HCT116 (cell line): ENCODE measurements at regions of chr16 and their contacts with region 1.

Region 1: GRCh38 chr16:88287219-88287618 is 95.5 kb upstream of the ZNF469 start:
- DNase-seq: peak; percentile 63
- ATAC-seq: peak; percentile 98
- H3K4me3 ChIP-seq: no peak overlapping the region
- H3K27ac ChIP-seq: no peak overlapping the region
- H3K4me1 ChIP-seq: peaks cover 4 to 14% of the 10 kb centered on the region in 2 experiments; a peak in 3 of 4 replicates
- H3K27me3 ChIP-seq: peaks cover 20% of the 10 kb centered on the region; the same call in 1 of the 2 replicates
- CTCF ChIP-seq: peak; percentile 93 to 100 (median 100)
- POLR2A ChIP-seq: no peak
- RAD21 ChIP-seq: peak; percentile 96

Region 2: GRCh38 chr16:88194397-88195268 is 92.6 kb before region 1 on chr16:
- CTCF ChIA-PET with region 1: interaction called, 4 read pairs
- POLR2A ChIA-PET with region 1: no interaction called
- RAD21 ChIA-PET with region 1: no interaction called
- intact Hi-C with region 1: loop called (anchors 1 kb)
- DNase-seq: no peak
- ATAC-seq: peak; percentile 49
- H3K4me3 ChIP-seq: no peak overlapping the region
- H3K27ac ChIP-seq: no peak overlapping the region
- H3K4me1 ChIP-seq: peaks cover 0 to 5% of the 10 kb centered on the region in 2 experiments; a peak in 1 of 4 replicates
- H3K27me3 ChIP-seq: no peaks in the 10 kb centered on the region
- CTCF ChIP-seq: peak in 1 of 3 experiments; percentile 19; a peak in 1 of 6 replicates
- POLR2A ChIP-seq: no peak
- RAD21 ChIP-seq: no peak; the same call in 1 of the 2 replicates

Region 3: DNA sequence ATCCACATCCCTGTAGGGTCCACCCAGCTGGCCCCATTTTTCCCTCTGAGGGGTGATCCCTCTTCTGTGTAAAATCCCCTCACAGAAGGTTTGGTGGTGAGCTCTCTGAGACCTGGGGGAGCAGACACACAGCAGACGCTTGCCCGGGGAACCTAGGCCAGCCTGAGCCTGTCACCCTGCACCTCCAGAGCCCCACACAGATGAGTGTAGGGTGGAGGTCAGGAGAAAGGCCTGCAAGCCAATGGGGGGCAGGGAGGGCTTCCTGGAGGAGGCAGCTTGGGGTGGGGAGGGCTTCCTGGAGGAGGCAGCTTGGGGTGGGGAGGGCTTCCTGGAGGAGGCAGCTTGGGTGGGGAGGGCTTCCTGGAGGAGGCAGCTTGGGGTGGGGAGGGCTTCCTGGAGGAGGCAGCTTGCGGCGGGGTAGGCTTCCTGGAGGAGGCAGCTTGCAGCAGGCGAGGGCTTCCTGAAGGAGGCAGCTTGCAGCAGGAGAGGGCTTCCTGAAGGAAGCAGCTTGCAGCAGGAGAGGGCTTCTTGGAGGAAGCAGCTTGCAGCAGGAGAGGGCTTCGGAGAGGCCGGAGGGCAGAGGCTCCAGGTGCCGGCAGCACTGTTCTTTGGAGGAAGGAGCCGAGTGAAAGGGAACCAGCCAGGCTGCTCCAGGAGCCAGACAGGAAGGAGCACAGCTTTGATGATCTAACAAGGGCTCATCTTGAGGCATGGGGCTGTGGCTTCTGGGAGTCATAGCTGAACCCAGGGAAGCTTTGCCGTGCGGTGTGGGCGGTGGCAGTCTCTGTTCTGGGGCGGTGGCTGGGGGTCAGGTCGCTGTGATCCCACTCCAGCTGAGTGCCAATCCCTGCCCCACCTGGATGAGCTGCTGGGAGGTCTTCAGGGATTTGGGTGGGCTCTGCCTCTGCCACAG is 11.9 kb after region 1 on chr16:
- CTCF ChIA-PET with region 1: interaction called, 16 read pairs
- POLR2A ChIA-PET with region 1: no interaction called
- RAD21 ChIA-PET with region 1: no interaction called
- intact Hi-C with region 1: no loop called
- DNase-seq: no peak
- ATAC-seq: no peak
- H3K4me3 ChIP-seq: no peak overlapping the region
- H3K27ac ChIP-seq: no peak overlapping the region
- H3K4me1 ChIP-seq: peaks cover 4 to 22% of the 10 kb centered on the region in 2 experiments; a peak in 3 of 4 replicates
- H3K27me3 ChIP-seq: peaks cover 18% of the 10 kb centered on the region; the same call in 1 of the 2 replicates
- CTCF ChIP-seq: no peak
- POLR2A ChIP-seq: no peak
- RAD21 ChIP-seq: no peak

Region 4: DNA sequence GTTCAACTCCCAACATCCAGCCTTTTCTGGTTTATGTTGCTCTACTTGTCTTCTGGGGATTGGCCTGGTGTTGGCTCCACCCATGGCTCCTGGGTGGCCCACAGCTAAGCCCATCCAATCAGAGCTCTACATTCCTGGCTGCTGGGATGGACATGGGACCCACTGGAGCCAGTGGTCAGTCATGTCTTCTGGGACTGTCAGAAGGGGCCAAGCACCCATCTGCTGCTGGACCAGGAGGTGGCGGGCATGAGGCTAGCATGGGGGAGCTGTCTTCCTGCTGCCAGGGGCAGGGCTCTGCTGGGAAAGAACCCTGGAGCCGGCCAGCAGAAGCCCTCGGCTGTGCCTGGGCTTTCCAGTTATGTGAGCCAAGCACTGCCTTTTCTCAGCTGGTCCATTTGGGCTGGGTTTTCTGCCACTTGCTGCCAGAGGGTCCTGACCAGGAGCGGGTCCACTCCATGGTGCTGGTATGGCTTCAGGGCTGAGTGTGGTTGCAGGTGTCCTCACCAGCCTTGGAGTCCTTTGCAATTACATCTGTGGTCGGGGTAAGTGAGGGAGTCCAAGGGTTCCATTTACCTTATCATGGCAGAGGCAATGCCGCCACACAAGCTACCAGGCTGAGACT is 78.1 kb after region 1 on chr16:
- CTCF ChIA-PET with region 1: no interaction called
- POLR2A ChIA-PET with region 1: no interaction called
- RAD21 ChIA-PET with region 1: no interaction called
- intact Hi-C with region 1: no loop called
- DNase-seq: no peak
- ATAC-seq: peak; percentile 59
- H3K4me3 ChIP-seq: no peak overlapping the region
- H3K27ac ChIP-seq: no peak overlapping the region
- H3K4me1 ChIP-seq: no peaks in the 10 kb centered on the region
- H3K27me3 ChIP-seq: peaks cover 24% of the 10 kb centered on the region; the same call in 1 of the 2 replicates
- CTCF ChIP-seq: no peak
- POLR2A ChIP-seq: no peak
- RAD21 ChIP-seq: no peak

Region 5: GRCh38 chr16:88383401-88384221 is 96.4 kb after region 1 on chr16:
- CTCF ChIA-PET with region 1: no interaction called
- POLR2A ChIA-PET with region 1: no interaction called
- RAD21 ChIA-PET with region 1: no interaction called
- intact Hi-C with region 1: loop called (anchors 1 kb)
- DNase-seq: peak; percentile 28
- ATAC-seq: peak; percentile 74
- H3K4me3 ChIP-seq: peak overlapping the region; percentile 48 to 89
- H3K27ac ChIP-seq: peak overlapping the region; percentile 64
- H3K4me1 ChIP-seq: peaks cover 18 to 28% of the 10 kb centered on the region in 2 experiments
- H3K27me3 ChIP-seq: no peaks in the 10 kb centered on the region
- CTCF ChIP-seq: peak in 2 of 3 experiments; percentile 65 to 68; a peak in 4 of 6 replicates
- POLR2A ChIP-seq: peak; percentile 0
- RAD21 ChIP-seq: no peak